Right ventricle myocardium superior (tissue), 1 donor: ENCODE measurements at regions of chr17 and their contacts with region 1.

Region 1: GRCh38 chr17:979538-980405 is at the start of gene NXN:
- DNase-seq: peak; percentile 93
- ATAC-seq: peak; percentile 95
- total RNA-seq, gene NXN: 20.2 TPM

Region 2: DNA sequence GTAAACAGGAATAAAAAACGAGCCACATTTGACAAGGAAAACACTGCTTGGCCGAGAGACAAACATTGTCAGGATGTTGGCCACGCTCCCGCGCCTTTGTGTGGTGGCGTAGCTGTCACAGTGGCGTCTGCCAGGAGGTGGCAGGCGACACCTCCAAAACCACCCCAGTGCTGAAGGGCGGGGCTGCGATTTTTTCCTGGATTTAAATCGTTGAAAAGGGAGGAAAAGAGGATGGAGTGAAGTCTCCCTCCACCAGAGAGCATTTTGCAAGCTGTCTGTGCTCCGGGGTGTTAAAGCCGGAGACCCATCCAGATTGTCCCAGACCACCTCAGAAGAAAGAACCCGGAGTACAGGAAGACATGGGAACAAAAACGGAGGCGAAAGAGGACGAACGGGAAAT is 184.9 kb before region 1 on chr17:
- intact Hi-C with region 1: loop called (anchors 2 kb)
- DNase-seq: peak; percentile 92
- ATAC-seq: peak; percentile 84

Region 3: GRCh38 chr17:879549-880442 is 100.0 kb before region 1 on chr17:
- intact Hi-C with region 1: loop called (anchors 5 kb)
- DNase-seq: peak; percentile 84
- ATAC-seq: peak; percentile 40

Region 4: GRCh38 chr17:903981-904481 is 75.7 kb before region 1 on chr17:
- intact Hi-C with region 1: loop called (anchors 10 kb)
- DNase-seq: no peak
- ATAC-seq: no peak